ENCODE measurements at regions of chr15 and their contacts with region 1.

Region 1: GRCh38 chr15:51401872-51402517 is 60.5 kb downstream of the GLDN start:
- H3K4me3 ChIP-seq: no peak overlapping the region
- H3K27ac ChIP-seq: no peak overlapping the region
- H3K4me1 ChIP-seq: no peaks in the 10 kb centered on the region
- CTCF ChIP-seq: no peak

Region 2: DNA sequence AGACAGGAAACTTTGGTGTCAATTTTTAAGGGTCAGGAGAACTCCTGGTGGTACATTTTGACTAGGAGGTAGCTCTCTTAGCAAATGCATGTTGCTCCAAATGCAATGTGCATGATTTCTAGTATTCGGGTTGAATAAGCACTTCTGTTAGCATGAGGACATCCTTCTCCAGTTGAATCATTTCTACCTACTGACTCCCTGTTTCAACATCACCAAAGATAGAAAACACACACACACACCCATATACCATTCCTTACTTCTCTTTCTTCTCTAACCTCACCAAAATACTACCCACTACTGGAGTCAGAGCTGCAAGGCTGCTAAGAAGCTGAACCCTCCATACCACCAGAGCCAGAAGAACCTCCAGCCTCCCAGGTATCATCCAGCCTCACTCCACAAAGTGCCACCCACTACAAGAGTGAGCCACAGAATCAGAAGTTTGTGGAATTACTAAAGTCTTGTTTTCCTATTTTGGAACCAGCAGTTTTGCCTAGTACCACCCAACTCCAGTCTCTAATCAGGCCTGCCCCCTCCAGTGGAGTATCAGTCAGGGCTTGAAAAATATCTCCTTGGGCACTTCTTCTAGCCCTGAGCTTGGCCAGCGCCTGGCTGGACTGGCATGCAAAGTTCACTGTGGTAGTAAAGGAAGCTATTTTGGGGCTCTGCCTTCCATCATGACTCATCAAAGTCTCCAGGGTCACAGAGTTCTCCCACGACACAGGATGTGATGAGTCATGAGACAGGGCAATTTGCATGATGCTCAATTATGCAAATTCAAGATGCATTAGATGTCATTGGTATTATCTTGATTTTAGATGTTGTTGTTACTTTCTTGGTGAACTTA is 173.8 kb before region 1 on chr15:
- CTCF ChIA-PET with region 1: interaction called, 34 read pairs
- POLR2A ChIA-PET with region 1: no interaction called
- H3K4me3 ChIP-seq: no peak overlapping the region
- H3K27ac ChIP-seq: no peak overlapping the region
- H3K4me1 ChIP-seq: no peaks in the 10 kb centered on the region
- CTCF ChIP-seq: no peak

Region 3: DNA sequence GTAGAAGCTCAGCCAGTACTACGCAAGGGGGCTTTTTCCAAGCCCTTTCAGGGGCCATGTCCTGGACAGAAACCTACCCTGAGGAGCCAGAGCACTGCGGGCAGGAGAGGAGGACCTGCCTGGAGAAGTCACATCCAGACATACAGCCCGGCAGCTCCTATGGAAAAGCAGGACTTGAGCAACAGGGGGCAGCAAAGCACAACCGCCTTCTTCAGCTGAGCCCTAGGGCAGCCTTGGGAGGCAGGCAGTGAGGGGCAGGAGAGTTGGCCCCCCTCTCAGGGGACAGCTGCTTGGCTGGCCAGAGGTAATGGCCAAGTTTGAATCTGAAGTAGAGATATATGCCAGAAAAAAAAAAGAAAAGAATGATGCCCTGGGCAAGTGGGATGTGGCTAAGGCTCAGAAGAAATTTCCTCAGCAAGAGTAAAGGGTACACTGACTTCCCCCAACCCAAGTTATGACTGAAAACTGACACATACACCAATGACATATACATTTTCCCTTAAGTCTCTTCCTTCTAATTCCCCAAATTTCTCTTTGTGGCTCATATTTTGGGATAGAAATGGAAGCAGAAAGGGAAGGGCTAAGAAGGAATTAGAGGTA is 120.5 kb before region 1 on chr15:
- CTCF ChIA-PET with region 1: interaction called, 20 read pairs
- POLR2A ChIA-PET with region 1: no interaction called
- H3K4me3 ChIP-seq: no peak overlapping the region
- H3K27ac ChIP-seq: no peak overlapping the region
- H3K4me1 ChIP-seq: no peaks in the 10 kb centered on the region
- CTCF ChIP-seq: peak; percentile 51

Region 4: DNA sequence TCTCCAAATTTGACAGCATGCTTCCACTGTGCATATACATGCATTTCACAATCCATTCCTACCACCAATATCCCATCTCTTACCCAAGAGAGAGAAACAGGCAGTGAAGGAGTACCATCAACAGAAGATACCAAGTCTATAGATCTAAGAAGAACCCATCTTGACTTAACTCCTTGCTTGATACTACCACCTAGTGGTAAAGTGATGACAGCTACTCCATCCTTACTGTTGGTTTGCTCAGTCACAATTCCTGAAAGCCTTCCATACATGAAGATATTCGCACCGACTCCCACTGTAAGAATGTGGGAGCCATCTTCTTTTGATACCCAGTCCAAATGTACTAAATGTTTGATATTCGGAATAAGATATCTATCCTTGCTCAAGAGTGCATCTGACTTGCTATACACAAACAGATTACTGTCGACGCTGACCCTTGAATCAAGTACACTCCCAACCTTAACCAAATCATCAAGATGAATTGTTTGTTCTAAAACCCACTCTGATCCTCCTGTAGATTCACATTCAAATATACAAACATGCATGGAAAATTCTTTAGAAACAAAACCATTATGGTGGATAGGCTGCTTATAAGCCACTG is 97.5 kb after region 1 on chr15:
- CTCF ChIA-PET with region 1: interaction called, 25 read pairs
- POLR2A ChIA-PET with region 1: no interaction called
- H3K4me3 ChIP-seq: no peak overlapping the region
- H3K27ac ChIP-seq: no peak overlapping the region
- H3K4me1 ChIP-seq: no peaks in the 10 kb centered on the region
- CTCF ChIP-seq: no peak

Measured in HEK293 (cell line).